HEK293T (cell line): ENCODE measurements at regions of chr18 and their contacts with region 1.

Region 1: GRCh38 chr18:24176727-24177416 is 38.0 kb downstream of the CABYR start:
- DNase-seq: peak; percentile 76

Region 2: DNA sequence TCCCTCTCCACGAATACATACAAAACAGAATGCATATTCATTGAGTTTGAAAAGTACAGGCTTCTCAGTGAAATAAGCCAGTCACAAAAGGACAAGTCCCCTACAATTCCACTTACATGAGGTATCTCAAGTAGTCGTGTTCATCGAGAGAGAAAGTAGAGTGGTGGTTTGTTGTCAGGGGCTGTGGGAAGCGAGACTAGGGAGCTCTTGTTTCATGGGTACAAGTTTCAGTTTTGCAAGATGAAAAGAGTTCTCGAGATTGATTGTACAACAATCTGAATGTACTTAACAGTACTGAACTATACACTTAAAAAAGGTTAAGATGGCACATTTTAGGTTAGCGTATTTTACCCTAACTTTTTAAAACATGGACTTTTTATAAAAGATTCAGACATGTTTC is 233.8 kb before region 1 on chr18:
- CTCF ChIA-PET with region 1: no interaction called
- POLR2A ChIA-PET with region 1: no interaction called
- DNase-seq: no peak

Region 3: GRCh38 chr18:24138789-24139616 is 37.9 kb before region 1 on chr18 and contains the start of gene CABYR:
- CTCF ChIA-PET with region 1: interaction called, 3 read pairs
- POLR2A ChIA-PET with region 1: interaction called, 12 read pairs
- DNase-seq: peak; percentile 94

Region 4: DNA sequence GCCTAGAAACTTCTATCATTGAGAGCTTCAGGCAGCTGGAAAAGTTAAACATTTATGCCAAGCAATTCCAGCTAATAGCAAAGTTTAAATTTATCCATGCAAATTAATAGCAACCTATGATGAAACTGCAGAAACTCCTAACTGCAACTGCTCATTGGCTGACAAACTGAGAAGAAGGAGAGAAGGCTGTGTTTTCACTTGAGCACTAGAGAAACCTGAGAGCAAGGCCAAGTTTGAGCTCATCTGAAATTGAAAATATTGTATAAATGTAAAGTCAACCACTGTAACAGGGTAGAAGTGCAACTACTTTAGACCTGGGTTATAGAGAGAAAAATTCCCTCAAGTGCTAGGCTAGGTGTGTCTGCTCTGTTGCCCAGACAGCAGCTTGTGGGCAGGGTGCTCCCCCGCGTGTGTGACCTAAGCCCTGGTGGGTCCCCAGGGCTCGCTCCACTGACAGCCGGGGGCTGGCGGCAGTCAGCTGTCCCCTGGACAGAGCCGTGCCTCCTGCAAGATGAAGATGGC is 12.2 kb after region 1 on chr18:
- CTCF ChIA-PET with region 1: interaction called, 55 read pairs
- POLR2A ChIA-PET with region 1: no interaction called
- DNase-seq: no peak

Region 5: GRCh38 chr18:24212939-24213338 is 36.1 kb after region 1 on chr18:
- CTCF ChIA-PET with region 1: interaction called, 13 read pairs
- POLR2A ChIA-PET with region 1: no interaction called
- DNase-seq: no peak

Region 6: DNA sequence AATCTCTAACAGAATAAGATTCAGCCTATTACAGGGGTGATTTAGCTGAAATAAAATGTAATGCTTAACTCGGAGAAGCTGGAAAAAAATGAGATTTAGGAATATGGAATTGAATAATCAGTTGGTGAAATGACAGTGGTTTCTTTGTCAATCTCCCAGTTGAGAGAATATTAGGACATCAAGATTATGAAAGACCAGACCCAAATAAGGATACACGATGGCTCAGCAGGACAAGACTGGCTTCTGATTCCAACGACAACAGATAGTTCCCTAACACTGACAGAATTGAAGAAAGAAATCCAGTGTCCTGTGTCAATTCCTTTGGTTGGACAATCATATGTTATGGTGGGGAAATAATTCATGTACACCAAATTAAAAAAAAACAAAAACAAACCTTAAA is 339.4 kb after region 1 on chr18:
- CTCF ChIA-PET with region 1: no interaction called
- POLR2A ChIA-PET with region 1: no interaction called
- DNase-seq: no peak